MCF 10A (cell line): ENCODE measurements at regions of chr1 and their contacts with region 1.

Region 1: GRCh38 chr1:206583707-206584648 is 28.3 kb downstream of the EIF2D start:
- DNase-seq: peak; percentile 90
- H3K4me3 Mint-ChIP-seq: no peak overlapping the region
- H3K27ac Mint-ChIP-seq: no peak overlapping the region
- H3K4me1 Mint-ChIP-seq: peaks cover 20% of the 10 kb centered on the region
- H3K27me3 Mint-ChIP-seq: no peaks in the 10 kb centered on the region
- CTCF ChIP-seq: peak; percentile 99

Region 2: DNA sequence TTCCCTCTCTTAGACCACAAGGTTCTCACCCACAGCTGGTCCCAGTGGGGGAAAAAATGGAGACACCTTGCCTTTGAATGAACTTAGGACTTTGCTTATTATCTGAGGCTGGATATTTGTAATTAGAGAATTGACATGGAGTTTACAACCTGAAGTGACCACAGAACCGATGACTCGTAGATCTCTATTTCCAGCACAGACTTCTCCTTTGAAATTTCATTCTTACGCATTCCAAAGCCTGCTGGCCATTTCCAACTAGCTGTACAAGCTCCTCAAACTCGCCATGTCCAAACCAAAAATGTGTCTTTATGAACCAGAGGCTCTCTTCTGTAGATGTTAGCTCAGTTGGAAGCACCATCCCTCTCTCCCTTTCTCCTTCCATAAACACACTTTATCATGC is 592.7 kb before region 1 on chr1:
- CTCF ChIA-PET with region 1: no interaction called
- POLR2A ChIA-PET with region 1: no interaction called
- intact Hi-C with region 1: no loop called
- DNase-seq: no peak
- H3K4me3 Mint-ChIP-seq: no peak overlapping the region
- H3K27ac Mint-ChIP-seq: no peak overlapping the region
- H3K4me1 Mint-ChIP-seq: peaks cover 8% of the 10 kb centered on the region
- H3K27me3 Mint-ChIP-seq: no peaks in the 10 kb centered on the region
- CTCF ChIP-seq: no peak

Region 3: DNA sequence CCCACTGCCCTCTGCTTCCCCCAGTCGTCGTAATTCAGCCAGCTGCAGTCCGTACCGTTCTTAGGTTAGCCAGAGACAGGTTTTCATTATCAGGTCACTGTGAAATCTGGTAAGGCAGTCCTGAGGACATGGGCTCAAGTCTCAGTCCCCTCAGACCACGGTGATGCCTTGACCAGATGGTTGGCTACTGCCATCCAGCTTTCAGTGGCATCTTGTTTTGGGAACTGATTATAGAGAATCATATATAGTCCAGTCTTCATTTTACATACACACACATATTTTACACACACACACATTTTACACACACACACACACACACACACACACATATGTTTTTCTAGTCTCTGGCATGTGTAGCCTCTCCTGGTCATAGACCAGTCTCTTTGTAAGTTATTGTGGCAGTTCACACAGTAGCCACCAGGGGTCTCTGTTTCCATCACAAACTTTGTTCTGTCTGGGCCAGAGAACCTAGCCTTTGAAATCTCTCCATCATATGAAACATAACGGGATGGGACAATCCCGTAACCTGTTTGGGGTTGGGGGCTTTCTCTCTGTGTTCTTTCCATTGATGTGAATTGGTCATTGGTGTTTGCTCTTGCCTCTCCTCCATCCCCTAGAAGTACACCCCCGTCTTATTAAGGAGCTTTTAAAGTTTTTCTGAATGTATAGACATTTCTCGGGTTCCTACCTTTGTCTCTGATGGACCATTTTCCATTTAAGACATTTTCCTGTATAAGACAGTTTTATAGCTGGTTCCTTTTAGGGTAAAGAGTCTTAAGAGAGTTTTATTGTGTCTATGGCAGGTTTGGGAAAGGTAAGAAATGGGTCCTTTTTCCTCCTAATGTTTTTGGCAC is 122.1 kb before region 1 on chr1:
- CTCF ChIA-PET with region 1: interaction called, 17 read pairs
- POLR2A ChIA-PET with region 1: no interaction called
- intact Hi-C with region 1: no loop called
- DNase-seq: peak; percentile 89
- H3K4me3 Mint-ChIP-seq: no peak overlapping the region
- H3K27ac Mint-ChIP-seq: peak overlapping the region; percentile 16
- H3K4me1 Mint-ChIP-seq: peaks cover 30% of the 10 kb centered on the region
- H3K27me3 Mint-ChIP-seq: peaks cover 8% of the 10 kb centered on the region
- CTCF ChIP-seq: peak; percentile 98

Region 4: GRCh38 chr1:206484901-206485300 is 99.1 kb before region 1 on chr1:
- CTCF ChIA-PET with region 1: interaction called, 851 read pairs
- POLR2A ChIA-PET with region 1: interaction called, 25 read pairs
- intact Hi-C with region 1: loop called (anchors 1 kb)
- DNase-seq: no peak
- H3K4me3 Mint-ChIP-seq: no peak overlapping the region
- H3K27ac Mint-ChIP-seq: no peak overlapping the region
- H3K4me1 Mint-ChIP-seq: peaks cover 23% of the 10 kb centered on the region
- H3K27me3 Mint-ChIP-seq: no peaks in the 10 kb centered on the region
- CTCF ChIP-seq: no peak

Region 5: DNA sequence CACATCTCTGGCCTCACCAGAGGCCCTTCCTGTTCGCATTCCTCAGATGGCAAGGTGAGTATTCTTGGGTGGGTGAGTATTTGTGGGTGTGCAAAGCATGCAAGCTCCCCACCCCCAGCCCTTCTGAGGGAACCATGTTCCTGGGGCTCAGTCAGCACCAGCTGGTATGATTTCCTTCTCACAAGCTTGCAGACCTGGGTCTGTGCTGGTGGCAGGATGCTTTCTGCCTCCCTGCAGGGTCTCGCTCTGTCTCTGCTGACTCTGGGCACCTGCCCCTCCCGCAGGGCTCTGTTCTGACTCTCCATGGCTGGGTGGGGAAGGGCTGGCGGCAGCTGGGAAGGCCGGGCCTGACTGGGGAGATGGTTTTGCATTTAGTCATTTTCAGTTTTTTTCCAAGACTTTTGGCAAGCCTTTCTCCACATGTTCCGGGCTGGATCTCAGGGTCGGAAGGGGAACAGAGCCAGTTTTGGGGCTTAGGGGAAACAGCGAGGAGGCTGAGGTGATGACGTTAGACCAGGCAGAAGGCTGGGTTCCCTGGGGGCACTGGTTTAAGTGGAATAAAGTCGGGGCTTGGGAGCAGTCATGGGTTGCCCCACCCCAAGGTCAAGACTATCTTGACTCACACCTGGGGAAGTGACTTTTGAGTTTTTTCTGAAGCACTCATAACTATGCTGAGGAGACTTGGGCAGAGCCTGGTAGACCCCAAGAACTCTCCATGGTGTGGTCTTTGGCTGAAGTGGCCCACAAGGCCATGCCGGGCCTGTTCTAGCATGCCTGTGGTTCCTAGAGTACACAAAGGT is 70.5 kb before region 1 on chr1:
- CTCF ChIA-PET with region 1: interaction called, 13 read pairs
- POLR2A ChIA-PET with region 1: interaction called, 5 read pairs
- intact Hi-C with region 1: no loop called
- DNase-seq: peak; percentile 100
- H3K4me3 Mint-ChIP-seq: peak overlapping the region; percentile 59
- H3K27ac Mint-ChIP-seq: peak overlapping the region; percentile 99
- H3K4me1 Mint-ChIP-seq: peaks cover 73% of the 10 kb centered on the region
- H3K27me3 Mint-ChIP-seq: no peaks in the 10 kb centered on the region
- CTCF ChIP-seq: no peak

Region 6: GRCh38 chr1:206544562-206545257 is 39.3 kb before region 1 on chr1:
- CTCF ChIA-PET with region 1: interaction called, 277 read pairs
- POLR2A ChIA-PET with region 1: interaction called, 11 read pairs
- intact Hi-C with region 1: loop called (anchors 1 kb)
- DNase-seq: peak; percentile 89
- H3K4me3 Mint-ChIP-seq: no peak overlapping the region
- H3K27ac Mint-ChIP-seq: no peak overlapping the region
- H3K4me1 Mint-ChIP-seq: no peaks in the 10 kb centered on the region
- H3K27me3 Mint-ChIP-seq: no peaks in the 10 kb centered on the region
- CTCF ChIP-seq: peak; percentile 98

Region 7: DNA sequence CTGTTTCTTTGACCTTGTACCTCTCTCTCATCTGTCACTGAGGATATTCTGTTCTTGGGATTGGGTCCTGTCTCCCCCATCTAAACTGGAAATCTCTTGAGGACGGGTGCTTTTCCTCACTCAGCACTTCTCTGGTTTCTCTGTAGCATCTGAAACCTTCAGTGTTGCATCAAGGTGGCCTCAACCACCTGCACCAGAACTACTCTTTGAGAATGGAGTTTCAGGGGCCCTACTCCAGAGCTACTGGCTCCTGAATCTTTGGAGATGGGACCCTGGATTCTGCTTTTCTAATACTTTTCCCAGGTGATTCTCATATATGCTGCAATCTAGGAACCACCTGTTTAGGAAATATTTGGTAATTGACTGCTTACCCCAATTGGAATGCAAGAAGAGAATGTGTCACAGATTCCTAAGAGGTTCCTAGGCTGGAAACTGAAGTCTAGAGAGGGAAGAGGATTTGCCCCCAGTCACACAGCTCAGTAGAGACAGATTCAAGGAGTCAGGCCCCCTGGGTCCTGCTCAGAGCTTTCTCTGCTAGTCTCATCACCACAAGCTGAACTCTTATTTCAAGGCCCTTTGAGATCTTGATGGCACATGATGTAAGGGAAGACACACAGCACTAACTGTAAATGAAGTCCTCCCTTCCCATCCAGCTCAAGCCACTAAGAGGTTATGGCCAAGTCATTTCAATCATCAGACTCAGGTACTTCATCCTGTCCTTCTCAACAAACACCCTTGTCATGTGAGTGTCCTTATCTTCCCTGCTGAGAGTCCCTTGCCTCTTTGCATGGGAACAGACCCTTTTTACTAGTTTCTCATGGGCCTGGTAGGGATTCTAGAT is 20.4 kb before region 1 on chr1:
- CTCF ChIA-PET with region 1: interaction called, 77 read pairs
- POLR2A ChIA-PET with region 1: no interaction called
- intact Hi-C with region 1: no loop called
- DNase-seq: no peak
- H3K4me3 Mint-ChIP-seq: no peak overlapping the region
- H3K27ac Mint-ChIP-seq: no peak overlapping the region
- H3K4me1 Mint-ChIP-seq: no peaks in the 10 kb centered on the region
- H3K27me3 Mint-ChIP-seq: no peaks in the 10 kb centered on the region
- CTCF ChIP-seq: no peak

Region 8: GRCh38 chr1:206693029-206693428 is 109.1 kb after region 1 on chr1:
- CTCF ChIA-PET with region 1: no interaction called
- POLR2A ChIA-PET with region 1: no interaction called
- intact Hi-C with region 1: no loop called
- DNase-seq: no peak
- H3K4me3 Mint-ChIP-seq: no peak overlapping the region
- H3K27ac Mint-ChIP-seq: no peak overlapping the region
- H3K4me1 Mint-ChIP-seq: peaks cover 56% of the 10 kb centered on the region
- H3K27me3 Mint-ChIP-seq: no peaks in the 10 kb centered on the region
- CTCF ChIP-seq: no peak